Esophagus muscularis mucosa (tissue), 4 donors: ENCODE measurements at regions of chr4 and their contacts with region 1.

Region 1: GRCh38 chr4:15162465-15163283 is 160.4 kb downstream of the CPEB2 start:
- DNase-seq: no peak
- H3K4me3 ChIP-seq: no peak overlapping the region
- H3K27ac ChIP-seq: no peak overlapping the region
- H3K4me1 ChIP-seq: no peaks in the 10 kb centered on the region
- H3K27me3 ChIP-seq: no peaks in the 10 kb centered on the region
- CTCF ChIP-seq: peak; percentile 49 to 57 (median 53)
- EP300 ChIP-seq: no peak
- POLR2A ChIP-seq: no peak

Region 2: DNA sequence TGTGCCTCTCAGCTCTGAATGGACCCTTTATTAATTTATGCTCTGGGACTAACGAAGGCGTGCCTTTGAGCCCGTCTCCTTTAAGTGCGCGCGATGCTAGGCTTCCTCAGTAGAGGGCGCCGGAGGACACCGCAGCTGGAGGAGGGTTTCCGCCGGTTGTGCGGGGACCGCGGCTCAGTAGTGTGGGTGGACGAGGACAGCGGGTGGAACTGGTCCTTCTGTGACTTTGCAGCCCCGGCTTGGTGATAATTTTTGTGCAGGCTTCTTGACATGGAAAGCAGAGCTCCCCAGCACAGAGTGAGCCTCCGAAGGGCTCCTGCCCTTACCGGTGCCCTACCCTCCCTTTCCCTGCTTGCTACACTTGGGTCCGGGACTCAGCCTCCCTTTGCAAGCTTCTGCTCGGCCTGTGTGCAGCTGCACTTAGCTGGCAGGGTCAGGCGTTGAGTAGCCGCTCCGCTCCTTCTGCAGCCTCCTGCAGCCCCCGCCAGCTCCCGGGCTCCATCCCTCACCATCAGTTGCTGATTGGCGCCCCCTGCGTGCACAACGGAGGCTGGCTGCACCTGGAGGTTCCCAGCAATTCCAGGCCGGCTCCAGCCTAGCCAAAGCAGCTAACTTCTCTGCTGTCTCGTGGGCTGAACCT is 1508.4 kb before region 1 on chr4:
- intact Hi-C with region 1: loop called (anchors 10 kb)
- DNase-seq: peak; percentile 92
- H3K4me3 ChIP-seq: peak overlapping the region; percentile 53 to 61 (median 57)
- H3K27ac ChIP-seq: peak overlapping the region in 1 of 4 donors; percentile 30
- H3K4me1 ChIP-seq: peaks cover 4 to 18% (median 14%) of the 10 kb centered on the region in 4 donors
- H3K27me3 ChIP-seq: no peaks in the 10 kb centered on the region
- CTCF ChIP-seq: peak; percentile 65 to 80 (median 70)
- EP300 ChIP-seq: no peak
- POLR2A ChIP-seq: no peak

Region 3: DNA sequence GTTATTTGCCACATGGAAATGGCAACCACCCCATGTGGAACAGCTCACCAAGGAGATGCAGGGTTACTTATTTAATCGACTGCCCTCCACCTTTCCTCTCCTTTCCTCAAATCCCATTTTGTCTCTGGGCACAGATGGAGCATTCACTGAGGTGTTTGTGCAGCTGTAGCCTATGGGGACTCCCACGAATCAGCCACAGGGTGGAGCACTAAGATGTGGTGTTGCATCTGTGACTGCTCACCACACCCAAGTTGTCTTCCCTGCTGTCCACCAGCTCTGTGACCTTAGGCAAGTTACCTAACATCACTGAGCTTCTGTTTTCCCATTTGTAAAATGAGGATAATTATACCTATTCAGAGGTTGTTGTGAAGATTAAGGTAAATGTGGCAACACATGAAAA is 412.8 kb before region 1 on chr4:
- intact Hi-C with region 1: loop called (anchors 10 kb)
- DNase-seq: peak; percentile 77
- H3K4me3 ChIP-seq: no peak overlapping the region
- H3K27ac ChIP-seq: no peak overlapping the region
- H3K4me1 ChIP-seq: no peaks in the 10 kb centered on the region
- H3K27me3 ChIP-seq: no peaks in the 10 kb centered on the region
- CTCF ChIP-seq: peak; percentile 54 to 62 (median 55)
- EP300 ChIP-seq: no peak
- POLR2A ChIP-seq: no peak

Region 4: GRCh38 chr4:15034071-15034764 is 128.5 kb before region 1 on chr4:
- intact Hi-C with region 1: no loop called
- DNase-seq: no peak
- H3K4me3 ChIP-seq: no peak overlapping the region
- H3K27ac ChIP-seq: peak overlapping the region; percentile 45 to 70 (median 57)
- H3K4me1 ChIP-seq: peaks cover 54 to 93% (median 87%) of the 10 kb centered on the region in 4 donors
- H3K27me3 ChIP-seq: no peaks in the 10 kb centered on the region
- CTCF ChIP-seq: no peak
- EP300 ChIP-seq: no peak
- POLR2A ChIP-seq: no peak